Sigmoid colon (tissue), 7 donors: ENCODE measurements at regions of chr4 and their contacts with region 1.

Region 1: DNA sequence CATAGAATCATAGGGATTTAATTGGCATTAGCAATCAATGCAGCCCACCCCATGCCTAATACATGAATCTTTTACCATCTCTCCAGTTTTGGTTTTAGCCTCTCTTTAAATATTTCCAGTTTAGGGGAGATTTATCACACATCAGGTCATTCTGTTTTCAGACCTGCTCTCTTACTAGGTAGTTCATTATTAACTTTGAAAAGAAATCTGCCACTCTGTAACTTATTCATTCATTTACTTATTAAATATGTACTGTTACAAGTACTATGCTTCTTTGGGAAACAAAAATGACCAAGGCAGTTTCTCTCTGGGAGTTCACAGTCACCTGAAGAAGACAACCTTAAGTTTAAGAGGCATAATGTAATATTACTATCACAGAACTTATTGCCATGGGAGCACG is 62.1 kb downstream of the USO1 start:
- DNase-seq: no peak
- H3K4me3 ChIP-seq: no peak overlapping the region
- H3K27ac ChIP-seq: no peak overlapping the region
- H3K4me1 ChIP-seq: no peaks in the 10 kb centered on the region
- H3K27me3 ChIP-seq: no peaks in the 10 kb centered on the region
- CTCF ChIP-seq: no peak
- EP300 ChIP-seq: no peak
- POLR2A ChIP-seq: no peak

Region 2: GRCh38 chr4:75514131-75514948 is 272.2 kb before region 1 on chr4 and contains the starts of genes RCHY1 and THAP6:
- intact Hi-C with region 1: no loop called
- DNase-seq: peak; percentile 98
- H3K4me3 ChIP-seq: peak within 1 kb of the TSS; percentile 63 to 72 (median 66)
- H3K27ac ChIP-seq: peak within 1 kb of the TSS; percentile 95 to 97 (median 96)
- H3K4me1 ChIP-seq: peaks cover 0 to 51% (median 39%) of the 10 kb centered on the region in 4 donors
- H3K27me3 ChIP-seq: no peaks in the 10 kb centered on the region
- CTCF ChIP-seq: no peak
- EP300 ChIP-seq: peak in 1 of 4 donors; percentile 54
- POLR2A ChIP-seq: peak in 1 of 2 donors; percentile 64
- total RNA-seq, gene RCHY1: 19.4 to 41.5 (median 24.5) TPM
- total RNA-seq, gene THAP6: 17.1 to 38.8 (median 20.0) TPM

Region 3: DNA sequence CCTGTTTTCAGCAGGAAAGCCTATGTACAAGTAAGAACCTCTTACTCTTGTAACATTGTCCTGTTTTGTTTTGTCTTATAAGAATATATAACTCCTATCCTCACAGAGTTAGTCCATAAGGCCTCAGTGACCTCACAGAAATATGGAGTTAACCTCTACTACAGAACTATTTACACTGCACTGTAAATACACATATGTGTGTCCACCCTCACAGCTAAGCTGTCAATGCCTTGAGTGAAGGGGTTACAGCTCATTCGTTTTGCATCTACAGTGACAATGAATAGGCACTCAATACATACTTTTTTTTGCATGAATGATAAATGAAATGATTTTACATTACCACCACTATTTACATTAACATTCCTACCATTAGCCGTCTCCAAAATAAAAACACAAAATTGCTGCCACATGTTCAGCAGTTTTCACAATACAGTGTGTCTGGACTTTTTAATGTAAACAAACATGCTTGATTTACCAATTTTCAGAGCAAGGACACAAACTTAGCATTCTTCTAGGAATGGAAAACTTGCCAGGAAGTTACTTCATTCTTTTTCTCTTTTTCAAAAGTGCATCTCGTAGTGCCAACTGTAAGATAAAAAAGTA is 163.8 kb after region 1 on chr4:
- intact Hi-C with region 1: loop called (anchors 10 kb)
- DNase-seq: no peak
- H3K4me3 ChIP-seq: no peak overlapping the region
- H3K27ac ChIP-seq: no peak overlapping the region
- H3K4me1 ChIP-seq: no peaks in the 10 kb centered on the region
- H3K27me3 ChIP-seq: no peaks in the 10 kb centered on the region
- CTCF ChIP-seq: no peak
- EP300 ChIP-seq: no peak
- POLR2A ChIP-seq: no peak

Region 4: DNA sequence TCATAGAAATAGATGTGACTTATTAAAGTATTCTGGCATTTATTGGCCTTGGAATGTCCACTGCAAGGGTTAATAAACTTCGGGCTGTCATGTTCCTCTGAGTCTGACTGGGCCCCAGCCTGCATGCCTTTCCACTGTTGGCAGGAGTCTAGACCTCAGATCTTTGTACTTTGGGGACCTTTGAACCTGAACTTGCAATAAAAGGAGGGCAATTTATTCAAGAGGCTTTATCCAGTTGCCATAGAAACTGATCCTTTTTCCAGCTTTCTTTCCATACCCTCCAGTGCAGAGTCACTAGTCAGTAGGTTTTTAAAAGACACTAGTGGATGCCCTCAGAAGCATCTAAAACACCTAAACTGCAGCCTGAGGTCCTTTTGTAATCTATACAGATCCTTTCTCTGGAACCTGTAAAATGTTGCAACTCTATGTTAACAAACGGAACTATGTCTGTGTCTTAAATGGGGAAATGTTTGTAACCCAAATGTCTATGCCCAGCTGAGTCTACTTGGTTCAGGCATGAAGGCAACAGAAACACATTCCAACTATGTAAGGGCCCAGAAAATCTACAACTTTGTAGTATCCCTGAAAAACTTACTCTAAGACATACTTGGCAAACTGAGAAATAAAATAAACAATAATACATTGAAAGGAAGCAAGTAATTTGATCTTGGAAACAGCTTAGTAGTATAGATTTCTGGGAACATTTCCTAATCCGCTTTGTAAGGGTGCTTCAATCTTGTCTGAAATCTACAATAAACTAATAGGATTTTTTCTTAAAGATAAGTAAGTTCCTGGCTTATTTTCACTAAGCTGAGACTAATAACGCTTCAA is 1069.9 kb after region 1 on chr4:
- intact Hi-C with region 1: no loop called
- DNase-seq: no peak
- H3K4me3 ChIP-seq: no peak overlapping the region
- H3K27ac ChIP-seq: no peak overlapping the region
- H3K4me1 ChIP-seq: peaks cover 0 to 8% (median 3%) of the 10 kb centered on the region in 4 donors
- H3K27me3 ChIP-seq: no peaks in the 10 kb centered on the region
- CTCF ChIP-seq: no peak
- EP300 ChIP-seq: no peak
- POLR2A ChIP-seq: no peak